Mammary epithelial cell (primary cell): ENCODE measurements at regions of chr11 and their contacts with region 1.

Region 1: GRCh38 chr11:72831513-72832300 is 17.5 kb downstream of the ATG16L2 start:
- DNase-seq: peak; percentile 61
- H3K4me3 ChIP-seq: no peak overlapping the region
- H3K27ac ChIP-seq: no peak overlapping the region
- H3K4me1 ChIP-seq: peaks cover 9% of the 10 kb centered on the region
- H3K27me3 ChIP-seq: no peaks in the 10 kb centered on the region
- CTCF ChIP-seq: peak; percentile 93 to 96

Region 2: DNA sequence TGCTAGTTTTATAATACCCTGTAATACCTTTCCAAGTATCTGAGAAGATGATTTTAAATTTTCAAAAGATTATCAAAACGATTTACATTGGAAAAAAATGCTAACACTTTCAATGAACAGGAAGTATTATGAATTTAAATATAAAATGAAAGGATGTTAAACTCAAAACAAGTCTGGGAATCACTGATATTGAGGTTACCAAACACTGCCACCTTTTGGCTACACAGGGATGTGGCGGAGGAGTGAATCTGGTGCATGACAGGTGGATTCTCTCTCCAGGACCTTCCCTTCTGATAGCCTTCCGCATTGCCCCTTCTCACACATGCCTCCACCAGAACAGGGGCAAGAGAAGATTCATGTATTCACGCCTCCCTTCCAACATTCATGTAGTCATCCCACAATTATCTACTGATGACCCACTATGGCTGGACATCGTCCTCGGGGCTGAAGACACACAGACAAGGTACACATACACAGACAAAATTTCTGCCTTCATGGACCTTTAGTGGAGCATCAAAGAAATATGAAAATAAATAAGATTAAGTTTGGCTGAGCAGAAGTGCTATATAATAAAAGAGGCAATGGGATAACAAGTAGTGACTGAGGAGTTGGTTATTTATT is 17.2 kb after region 1 on chr11:
- CTCF ChIA-PET with region 1: interaction called, 12 read pairs
- dilution Hi-C with region 1: no loop called
- in situ Hi-C with region 1: no loop called
- intact Hi-C with region 1: loop called (anchors 1 kb)
- DNase-seq: peak; percentile 22
- H3K4me3 ChIP-seq: no peak overlapping the region
- H3K27ac ChIP-seq: no peak overlapping the region
- H3K4me1 ChIP-seq: no peaks in the 10 kb centered on the region
- H3K27me3 ChIP-seq: no peaks in the 10 kb centered on the region
- CTCF ChIP-seq: peak; percentile 68 to 83

Region 3: GRCh38 chr11:73236854-73237253 is 405.1 kb after region 1 on chr11:
- CTCF ChIA-PET with region 1: interaction called, 3 read pairs
- dilution Hi-C with region 1: no loop called
- in situ Hi-C with region 1: loop called in 1 of 2 experiments (anchors 10 kb)
- intact Hi-C with region 1: loop called (anchors 2 kb)
- DNase-seq: peak; percentile 48
- H3K4me3 ChIP-seq: no peak overlapping the region
- H3K27ac ChIP-seq: no peak overlapping the region
- H3K4me1 ChIP-seq: peaks cover 43% of the 10 kb centered on the region
- H3K27me3 ChIP-seq: no peaks in the 10 kb centered on the region
- CTCF ChIP-seq: peak; percentile 83 to 85

Region 4: DNA sequence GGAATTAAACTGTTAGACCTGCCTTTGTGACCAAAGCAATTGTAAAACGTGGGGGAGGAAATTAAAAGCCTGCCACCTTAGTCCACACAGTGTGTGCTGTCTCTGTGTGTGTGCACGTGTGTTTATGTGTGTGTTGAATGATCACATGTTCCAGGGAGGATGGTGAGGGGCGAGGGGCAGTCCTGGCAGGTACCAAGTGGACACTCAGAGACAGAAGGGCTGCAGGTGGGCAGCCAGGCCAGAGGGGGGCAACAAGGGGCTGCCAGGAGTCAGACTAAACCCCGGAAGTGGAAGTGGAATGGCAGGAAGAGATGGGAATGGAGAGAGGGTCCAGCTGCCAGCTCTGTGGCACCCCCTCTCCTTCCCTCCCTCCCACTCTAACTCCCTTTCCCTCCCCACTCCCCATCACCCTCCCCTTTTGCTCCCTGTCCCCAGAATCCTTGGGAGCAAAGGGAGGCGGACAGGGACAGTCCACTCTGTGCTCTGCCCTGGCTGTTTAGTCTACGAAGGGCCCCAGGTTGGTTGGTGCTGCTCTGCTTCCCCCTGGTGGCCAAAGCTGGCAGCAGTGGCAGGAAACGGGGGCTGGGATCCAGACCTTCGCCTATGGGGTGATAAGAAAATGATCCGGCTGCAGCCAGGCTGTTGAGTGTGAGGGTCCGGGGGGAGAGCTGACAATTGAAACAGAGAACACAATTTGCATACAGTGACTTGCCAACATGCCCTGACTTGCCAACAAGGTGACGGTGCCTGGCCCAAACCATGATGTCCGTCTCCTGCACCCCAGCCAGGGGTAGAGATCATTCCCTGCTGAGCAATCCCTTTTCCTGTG is 410.8 kb after region 1 on chr11:
- CTCF ChIA-PET with region 1: interaction called, 3 read pairs
- dilution Hi-C with region 1: no loop called
- in situ Hi-C with region 1: loop called in 1 of 2 experiments (anchors 10 kb)
- intact Hi-C with region 1: loop called (anchors 2 kb)
- DNase-seq: peak; percentile 63
- H3K4me3 ChIP-seq: no peak overlapping the region
- H3K27ac ChIP-seq: no peak overlapping the region
- H3K4me1 ChIP-seq: peaks cover 45% of the 10 kb centered on the region
- H3K27me3 ChIP-seq: no peaks in the 10 kb centered on the region
- CTCF ChIP-seq: peak; percentile 96 to 99

Region 5: DNA sequence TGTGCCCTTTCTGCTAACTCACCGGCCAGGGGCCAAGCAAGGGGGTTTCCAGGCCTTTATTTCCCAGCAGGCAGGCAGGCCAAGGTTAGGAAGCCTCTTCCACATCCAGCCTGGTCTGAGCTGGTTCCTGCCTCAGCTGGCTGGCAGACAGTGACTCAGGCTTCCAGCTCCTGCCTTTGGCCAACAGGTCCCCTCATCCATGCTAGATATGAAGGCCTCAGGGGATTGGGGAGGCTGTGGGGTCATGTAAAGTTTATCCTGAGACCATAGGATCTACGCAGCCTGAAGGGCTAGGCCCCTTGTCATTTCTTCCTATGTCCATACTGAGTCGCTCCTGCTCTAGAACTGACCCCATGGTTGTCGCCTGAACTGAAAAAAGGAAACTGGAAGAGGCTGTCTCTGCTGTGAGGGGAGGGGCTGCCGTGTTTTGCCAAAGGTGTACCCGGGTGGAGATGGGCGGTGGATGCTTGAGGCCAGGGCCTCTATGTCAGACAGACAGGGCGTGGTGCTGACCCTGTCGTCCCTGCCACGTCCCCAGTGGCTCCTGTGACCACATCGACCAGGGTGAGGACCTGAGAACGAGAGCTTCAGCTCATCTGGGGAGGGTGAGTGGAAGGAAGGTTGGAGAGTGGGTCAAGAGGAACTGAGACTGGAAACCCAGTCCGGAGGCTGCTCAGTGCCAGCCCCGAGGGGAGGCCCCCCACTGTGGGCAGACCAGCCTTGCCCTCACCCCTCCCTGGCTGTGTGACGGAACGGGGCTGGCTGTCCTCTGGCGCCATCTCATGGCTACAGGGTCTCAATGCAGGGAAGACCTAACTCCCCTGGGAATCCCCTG is 457.4 kb after region 1 on chr11:
- CTCF ChIA-PET with region 1: no interaction called
- dilution Hi-C with region 1: no loop called
- in situ Hi-C with region 1: no loop called
- intact Hi-C with region 1: loop called (anchors 1 kb)
- DNase-seq: peak; percentile 87
- H3K4me3 ChIP-seq: no peak overlapping the region
- H3K27ac ChIP-seq: peak overlapping the region; percentile 30
- H3K4me1 ChIP-seq: peaks cover 15% of the 10 kb centered on the region
- H3K27me3 ChIP-seq: no peaks in the 10 kb centered on the region
- CTCF ChIP-seq: peak; percentile 81 to 98